ENCODE measurements at regions of chr11 and their contacts with region 1.

Region 1: DNA sequence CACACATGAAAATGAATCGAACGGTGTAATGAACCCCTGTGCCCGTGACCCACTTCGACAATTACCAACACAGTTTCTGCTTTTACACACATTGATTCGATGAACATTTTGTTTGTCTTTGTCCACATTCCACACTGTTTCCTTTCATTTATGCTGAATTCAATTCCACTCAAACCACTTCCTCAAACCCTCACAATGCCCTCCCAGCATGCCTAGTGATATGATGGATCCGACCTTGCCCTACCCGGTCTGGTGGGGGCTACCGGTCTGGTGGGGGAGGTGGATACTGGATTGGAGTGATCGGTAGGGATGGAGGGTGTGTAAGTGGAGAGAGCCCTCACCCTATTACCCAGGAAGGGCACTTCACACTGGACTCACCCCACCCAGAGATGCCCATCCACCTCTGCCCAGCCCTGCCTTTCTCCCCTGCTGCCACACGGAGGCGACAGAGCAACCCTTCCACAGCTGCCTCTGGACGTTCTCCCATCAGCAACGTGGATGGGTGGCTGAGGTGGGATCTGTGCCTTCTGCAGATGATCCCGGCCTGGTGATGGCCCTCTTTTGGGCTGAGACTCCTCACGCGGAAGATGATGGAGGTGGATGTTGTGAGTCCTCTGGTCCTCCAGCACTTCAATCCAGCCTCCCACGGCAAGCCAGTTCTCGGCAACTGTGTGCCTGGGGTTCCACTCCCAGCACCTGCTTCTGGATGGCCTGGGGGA is 33.0 kb upstream of the P2RY2 start:
- DNase-seq: peak in 7 of 10 donors; percentile 32 to 92 (median 63)

Region 2: GRCh38 chr11:73085189-73085875 is 99.8 kb before region 1 on chr11:
- intact Hi-C with region 1: no loop called
- DNase-seq: no peak

Region 3: DNA sequence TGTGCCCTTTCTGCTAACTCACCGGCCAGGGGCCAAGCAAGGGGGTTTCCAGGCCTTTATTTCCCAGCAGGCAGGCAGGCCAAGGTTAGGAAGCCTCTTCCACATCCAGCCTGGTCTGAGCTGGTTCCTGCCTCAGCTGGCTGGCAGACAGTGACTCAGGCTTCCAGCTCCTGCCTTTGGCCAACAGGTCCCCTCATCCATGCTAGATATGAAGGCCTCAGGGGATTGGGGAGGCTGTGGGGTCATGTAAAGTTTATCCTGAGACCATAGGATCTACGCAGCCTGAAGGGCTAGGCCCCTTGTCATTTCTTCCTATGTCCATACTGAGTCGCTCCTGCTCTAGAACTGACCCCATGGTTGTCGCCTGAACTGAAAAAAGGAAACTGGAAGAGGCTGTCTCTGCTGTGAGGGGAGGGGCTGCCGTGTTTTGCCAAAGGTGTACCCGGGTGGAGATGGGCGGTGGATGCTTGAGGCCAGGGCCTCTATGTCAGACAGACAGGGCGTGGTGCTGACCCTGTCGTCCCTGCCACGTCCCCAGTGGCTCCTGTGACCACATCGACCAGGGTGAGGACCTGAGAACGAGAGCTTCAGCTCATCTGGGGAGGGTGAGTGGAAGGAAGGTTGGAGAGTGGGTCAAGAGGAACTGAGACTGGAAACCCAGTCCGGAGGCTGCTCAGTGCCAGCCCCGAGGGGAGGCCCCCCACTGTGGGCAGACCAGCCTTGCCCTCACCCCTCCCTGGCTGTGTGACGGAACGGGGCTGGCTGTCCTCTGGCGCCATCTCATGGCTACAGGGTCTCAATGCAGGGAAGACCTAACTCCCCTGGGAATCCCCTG is 104.0 kb after region 1 on chr11:
- intact Hi-C with region 1: loop called (anchors 1 kb)
- DNase-seq: peak; percentile 54 to 96 (median 73)